Posterior cingulate gyrus (tissue), 11 donors: ENCODE measurements at regions of chr2 and their contacts with region 1.

Region 1: DNA sequence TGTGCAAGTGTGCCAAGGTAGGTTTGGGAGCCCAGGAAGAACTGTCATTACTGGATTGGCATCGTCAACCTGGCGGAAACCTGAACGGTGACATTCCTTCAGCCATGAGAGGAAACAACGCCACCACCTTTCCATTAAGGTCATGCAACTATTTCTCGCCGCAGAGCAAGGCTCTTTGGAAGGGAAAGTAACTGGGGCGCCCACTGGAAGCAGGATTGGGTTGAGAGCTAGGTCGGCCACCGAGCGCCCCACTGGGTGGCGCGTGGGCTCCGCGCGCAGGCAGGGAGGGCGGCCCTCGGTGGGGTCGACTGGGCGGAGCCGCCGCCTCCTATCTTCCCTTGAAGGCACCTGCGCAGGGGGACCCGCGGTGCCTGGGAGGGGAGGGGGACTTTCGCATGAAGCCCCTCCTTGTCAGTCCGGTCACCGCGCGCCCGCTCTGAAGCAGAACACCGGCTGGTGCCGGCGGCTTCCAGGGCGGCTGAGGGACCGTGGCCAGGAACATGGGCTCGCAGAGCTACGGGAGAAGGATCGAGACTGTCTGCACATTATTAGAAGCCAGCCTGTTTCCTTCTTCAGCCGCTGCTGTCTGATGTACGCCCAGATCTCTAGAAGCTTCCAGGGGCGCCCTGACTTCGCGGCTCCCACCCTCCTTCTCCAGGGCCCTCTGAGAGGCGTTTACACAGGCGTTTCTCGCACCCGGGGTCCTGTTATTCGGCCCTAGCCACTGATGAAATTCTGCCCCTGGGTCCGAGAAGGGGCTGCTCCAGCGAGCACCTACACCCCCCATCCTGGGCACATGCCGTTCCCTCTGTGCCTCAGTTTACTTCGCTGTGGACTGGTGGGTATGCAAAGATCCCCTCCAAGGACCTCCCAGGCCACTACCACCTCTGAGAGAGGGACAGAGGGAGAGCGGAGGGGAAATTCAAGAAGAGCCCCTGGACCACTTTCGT is 27.3 kb upstream of the MAL start:
- DNase-seq: peak in 3 of 10 donors; percentile 65 to 88 (median 69)

Region 2: DNA sequence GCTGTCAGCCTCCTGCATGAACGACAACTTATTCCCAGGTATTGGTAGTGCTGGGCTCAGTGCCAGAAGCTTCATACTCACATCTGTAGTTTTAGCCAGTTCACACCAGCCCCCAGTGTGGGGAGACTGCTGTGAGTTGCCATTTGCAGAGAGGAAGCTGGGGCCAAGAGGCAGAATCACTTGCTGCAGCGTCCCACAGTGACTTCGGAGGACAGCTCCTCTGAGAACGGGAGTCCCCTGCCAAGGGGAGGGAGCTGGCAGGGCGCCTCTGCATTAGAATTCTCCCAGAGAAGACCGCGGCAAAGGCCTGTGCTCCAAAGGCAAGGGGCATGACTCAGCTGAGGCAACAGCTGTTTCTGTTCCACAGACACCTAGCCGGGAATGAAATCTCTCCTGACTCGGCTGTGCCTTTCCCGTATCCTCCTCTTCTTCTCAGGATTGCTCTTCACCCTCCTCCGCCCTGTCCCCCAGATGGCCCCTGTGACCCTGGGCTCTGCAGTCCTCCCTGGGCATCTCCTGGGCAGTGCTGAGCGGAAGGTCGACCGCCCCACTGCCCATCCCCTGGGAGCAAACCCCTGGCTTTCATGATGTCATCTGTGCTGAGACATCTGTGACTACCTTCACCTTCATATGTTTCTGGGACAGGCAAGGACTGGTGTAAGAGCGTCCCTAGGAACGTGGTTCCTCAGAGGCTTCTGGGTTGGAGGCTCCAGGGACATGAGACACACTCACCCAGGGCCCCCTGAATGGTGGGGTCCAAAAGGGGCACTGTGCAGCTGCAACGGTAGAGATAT is 45.2 kb after region 1 on chr2:
- intact Hi-C with region 1: no loop called
- DNase-seq: peak; percentile 74 to 98 (median 87)

Region 3: GRCh38 chr2:95076784-95077529 is 78.7 kb after region 1 on chr2:
- intact Hi-C with region 1: loop called (anchors 2 kb)
- DNase-seq: peak; percentile 75 to 98 (median 88)